Natural killer cell (primary cell): ENCODE measurements at regions of chr10 and their contacts with region 1.

Region 1: GRCh38 chr10:62816331-62817120 is at the start of gene EGR2:
- DNase-seq: peak; percentile 91 to 97
- ATAC-seq: peak; percentile 75 to 91 (median 81)
- H3K4me3 ChIP-seq: peak within 1 kb of the TSS; percentile 73
- H3K4me3 Mint-ChIP-seq: peak within 1 kb of the TSS; percentile 98
- H3K27ac ChIP-seq: peak within 1 kb of the TSS; percentile 87
- H3K27ac Mint-ChIP-seq: peak within 1 kb of the TSS; percentile 93 to 95
- H3K4me1 ChIP-seq: peaks cover 53% of the 10 kb centered on the region
- H3K4me1 Mint-ChIP-seq: peaks cover 59 to 67% of the 10 kb centered on the region in 2 donors
- H3K27me3 ChIP-seq: peaks cover 22% of the 10 kb centered on the region
- H3K27me3 Mint-ChIP-seq: peaks cover 22 to 31% of the 10 kb centered on the region in 2 donors
- CTCF ChIP-seq: no peak
- total RNA-seq, gene EGR2: 10.0 to 17.2 (median 12.8) TPM

Region 2: DNA sequence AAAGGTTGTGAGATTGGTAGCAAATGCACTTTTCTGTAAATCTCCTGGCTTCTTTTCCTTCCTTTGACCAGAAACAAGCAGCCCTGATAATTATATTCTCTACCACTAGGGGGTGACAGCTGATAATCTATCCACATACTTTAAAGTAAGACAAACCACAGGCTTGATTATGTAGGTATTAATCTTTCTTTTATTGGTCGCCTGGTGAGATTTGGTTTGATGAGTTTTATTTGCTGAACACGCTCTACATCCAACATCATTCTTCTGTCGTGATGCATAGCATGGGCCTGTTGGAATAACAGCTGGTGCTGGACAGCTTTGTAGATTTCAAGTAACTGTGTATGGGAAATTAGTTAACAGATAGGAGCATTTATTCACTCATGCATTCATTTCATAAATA is 378.8 kb before region 1 on chr10:
- intact Hi-C with region 1: loop called (anchors 5 kb)
- DNase-seq: peak in 1 of 2 donors; percentile 77
- ATAC-seq: peak; percentile 73 to 82 (median 76)
- H3K4me3 ChIP-seq: no peak overlapping the region
- H3K4me3 Mint-ChIP-seq: no peak overlapping the region
- H3K27ac ChIP-seq: no peak overlapping the region
- H3K27ac Mint-ChIP-seq: no peak overlapping the region
- H3K4me1 ChIP-seq: no peaks in the 10 kb centered on the region
- H3K4me1 Mint-ChIP-seq: peaks cover 5% of the 10 kb centered on the region in 2 donors
- H3K27me3 ChIP-seq: peaks cover 4% of the 10 kb centered on the region
- H3K27me3 Mint-ChIP-seq: peaks cover 4 to 11% of the 10 kb centered on the region in 2 donors
- CTCF ChIP-seq: peak; percentile 85

Region 3: GRCh38 chr10:62610649-62611229 is 205.8 kb before region 1 on chr10:
- intact Hi-C with region 1: loop called (anchors 1 kb)
- DNase-seq: peak; percentile 56 to 86
- ATAC-seq: peak; percentile 85 to 96 (median 88)
- H3K4me3 ChIP-seq: no peak overlapping the region
- H3K4me3 Mint-ChIP-seq: no peak overlapping the region
- H3K27ac ChIP-seq: no peak overlapping the region
- H3K27ac Mint-ChIP-seq: no peak overlapping the region
- H3K4me1 ChIP-seq: peaks cover 11% of the 10 kb centered on the region
- H3K4me1 Mint-ChIP-seq: peaks cover 20 to 23% of the 10 kb centered on the region in 2 donors
- H3K27me3 ChIP-seq: no peaks in the 10 kb centered on the region
- H3K27me3 Mint-ChIP-seq: no peaks in the 10 kb centered on the region
- CTCF ChIP-seq: peak; percentile 96

Region 4: GRCh38 chr10:62681211-62681940 is 135.2 kb before region 1 on chr10:
- intact Hi-C with region 1: loop called (anchors 1 kb)
- DNase-seq: peak; percentile 70 to 91
- ATAC-seq: peak; percentile 84 to 90 (median 90)
- H3K4me3 ChIP-seq: no peak overlapping the region
- H3K4me3 Mint-ChIP-seq: peak overlapping the region; percentile 13
- H3K27ac ChIP-seq: peak overlapping the region; percentile 15
- H3K27ac Mint-ChIP-seq: peak overlapping the region; percentile 61 to 85
- H3K4me1 ChIP-seq: peaks cover 18% of the 10 kb centered on the region
- H3K4me1 Mint-ChIP-seq: peaks cover 34 to 55% of the 10 kb centered on the region in 2 donors
- H3K27me3 ChIP-seq: no peaks in the 10 kb centered on the region
- H3K27me3 Mint-ChIP-seq: no peaks in the 10 kb centered on the region
- CTCF ChIP-seq: peak; percentile 36

Region 5: DNA sequence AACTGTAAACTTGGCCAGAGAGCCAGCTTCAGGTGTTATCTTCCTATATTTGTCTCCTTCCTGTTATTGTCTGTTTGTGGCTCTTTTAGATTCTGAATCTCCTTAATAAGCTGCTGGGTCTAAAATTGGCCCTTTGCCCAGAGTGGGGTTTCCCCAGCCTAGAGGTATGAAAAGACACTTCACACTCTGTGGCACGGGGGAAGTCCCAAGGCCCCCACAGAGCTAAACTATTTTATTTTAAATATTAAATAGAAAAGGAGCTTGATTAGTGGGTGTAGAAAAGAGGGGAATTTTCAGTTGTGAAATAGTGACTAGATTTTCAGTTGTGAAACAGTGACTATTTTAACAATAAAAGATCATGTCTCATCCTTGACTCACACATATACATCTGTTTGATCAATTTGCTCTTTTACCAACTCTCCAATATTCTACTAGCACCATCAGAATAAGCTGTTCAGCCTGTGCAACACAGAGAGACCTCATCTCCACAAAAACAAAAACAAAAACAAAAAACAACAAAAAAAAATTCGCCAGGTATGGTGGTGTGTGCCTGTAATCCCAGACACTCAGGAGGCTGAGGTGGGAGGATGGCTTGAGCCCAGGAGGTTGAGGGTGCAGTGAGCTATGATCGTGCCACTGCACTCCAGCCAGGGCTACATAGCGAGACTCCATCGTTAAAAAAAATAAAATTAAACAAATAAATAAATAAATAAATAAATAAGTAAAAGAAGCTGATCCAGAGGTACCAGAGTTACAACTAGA is 36.9 kb before region 1 on chr10:
- intact Hi-C with region 1: loop called (anchors 1 kb)
- DNase-seq: peak; percentile 76 to 97
- ATAC-seq: peak; percentile 92 to 98 (median 97)
- H3K4me3 ChIP-seq: no peak overlapping the region
- H3K4me3 Mint-ChIP-seq: peak overlapping the region; percentile 45
- H3K27ac ChIP-seq: no peak overlapping the region
- H3K27ac Mint-ChIP-seq: peak overlapping the region; percentile 43 to 57
- H3K4me1 ChIP-seq: peaks cover 14% of the 10 kb centered on the region
- H3K4me1 Mint-ChIP-seq: peaks cover 22% of the 10 kb centered on the region in 2 donors
- H3K27me3 ChIP-seq: no peaks in the 10 kb centered on the region
- H3K27me3 Mint-ChIP-seq: no peaks in the 10 kb centered on the region
- CTCF ChIP-seq: no peak

Region 6: GRCh38 chr10:62851442-62851841 is 34.9 kb after region 1 on chr10:
- intact Hi-C with region 1: loop called (anchors 1 kb)
- DNase-seq: peak in 1 of 2 donors; percentile 41
- ATAC-seq: no peak
- H3K4me3 ChIP-seq: no peak overlapping the region
- H3K4me3 Mint-ChIP-seq: no peak overlapping the region
- H3K27ac ChIP-seq: no peak overlapping the region
- H3K27ac Mint-ChIP-seq: peak overlapping the region in 1 of 2 donors; percentile 35
- H3K4me1 ChIP-seq: peaks cover 32% of the 10 kb centered on the region
- H3K4me1 Mint-ChIP-seq: peaks cover 55 to 56% of the 10 kb centered on the region in 2 donors
- H3K27me3 ChIP-seq: no peaks in the 10 kb centered on the region
- H3K27me3 Mint-ChIP-seq: no peaks in the 10 kb centered on the region
- CTCF ChIP-seq: peak; percentile 37

Region 7: GRCh38 chr10:62907470-62908212 is 91.1 kb after region 1 on chr10:
- intact Hi-C with region 1: no loop called
- DNase-seq: no peak
- ATAC-seq: no peak
- H3K4me3 ChIP-seq: no peak overlapping the region
- H3K4me3 Mint-ChIP-seq: no peak overlapping the region
- H3K27ac ChIP-seq: no peak overlapping the region
- H3K27ac Mint-ChIP-seq: no peak overlapping the region
- H3K4me1 ChIP-seq: no peaks in the 10 kb centered on the region
- H3K4me1 Mint-ChIP-seq: no peaks in the 10 kb centered on the region
- H3K27me3 ChIP-seq: no peaks in the 10 kb centered on the region
- H3K27me3 Mint-ChIP-seq: peaks cover 4 to 9% of the 10 kb centered on the region in 2 donors
- CTCF ChIP-seq: no peak

Region 8: GRCh38 chr10:63157845-63158624 is 341.5 kb after region 1 on chr10:
- intact Hi-C with region 1: loop called (anchors 1 kb)
- DNase-seq: peak in 1 of 2 donors; percentile 92
- ATAC-seq: peak; percentile 75 to 86 (median 78)
- H3K4me3 ChIP-seq: no peak overlapping the region
- H3K4me3 Mint-ChIP-seq: no peak overlapping the region
- H3K27ac ChIP-seq: no peak overlapping the region
- H3K27ac Mint-ChIP-seq: no peak overlapping the region
- H3K4me1 ChIP-seq: no peaks in the 10 kb centered on the region
- H3K4me1 Mint-ChIP-seq: peaks cover 12 to 22% of the 10 kb centered on the region in 2 donors
- H3K27me3 ChIP-seq: no peaks in the 10 kb centered on the region
- H3K27me3 Mint-ChIP-seq: no peaks in the 10 kb centered on the region
- CTCF ChIP-seq: peak; percentile 82